Calu3 (cell line): ENCODE measurements at regions of chr4 and their contacts with region 1.

Region 1: DNA sequence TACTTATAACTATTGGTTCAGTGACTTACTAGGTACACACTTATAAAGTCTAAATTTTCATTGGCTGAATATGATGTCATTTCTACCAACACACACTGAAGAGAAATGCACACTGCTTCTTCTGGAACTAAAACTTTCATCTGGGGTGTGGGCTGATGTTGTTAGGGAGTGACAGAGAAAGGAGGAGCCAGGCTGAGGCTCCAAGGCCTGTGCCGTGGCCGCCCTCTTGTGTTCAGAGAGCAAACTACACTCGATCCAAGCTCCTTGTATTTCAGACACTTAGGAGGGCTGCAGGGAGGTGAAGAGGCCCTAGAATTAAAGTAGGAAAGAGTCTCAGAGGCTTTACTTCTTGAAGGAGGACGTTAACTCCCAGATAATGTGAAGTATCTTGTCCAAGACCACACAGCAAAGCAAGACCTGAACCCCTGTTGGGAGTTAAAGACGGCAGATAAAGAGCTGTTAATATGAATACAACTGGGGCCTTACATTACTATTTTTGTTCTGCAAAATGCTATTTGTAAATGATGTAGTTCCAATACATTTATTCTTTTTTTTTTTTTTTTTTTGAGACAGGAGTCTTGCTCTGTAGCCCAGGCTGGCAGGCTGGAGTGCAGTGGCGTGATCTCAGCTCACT is 137.5 kb downstream of the AFAP1 start:
- DNase-seq: peak; percentile 77
- H3K4me3 Mint-ChIP-seq: no peak overlapping the region
- H3K27ac Mint-ChIP-seq: no peak overlapping the region
- H3K4me1 Mint-ChIP-seq: peaks cover 32% of the 10 kb centered on the region
- H3K27me3 Mint-ChIP-seq: no peaks in the 10 kb centered on the region
- CTCF ChIP-seq: no peak

Region 2: DNA sequence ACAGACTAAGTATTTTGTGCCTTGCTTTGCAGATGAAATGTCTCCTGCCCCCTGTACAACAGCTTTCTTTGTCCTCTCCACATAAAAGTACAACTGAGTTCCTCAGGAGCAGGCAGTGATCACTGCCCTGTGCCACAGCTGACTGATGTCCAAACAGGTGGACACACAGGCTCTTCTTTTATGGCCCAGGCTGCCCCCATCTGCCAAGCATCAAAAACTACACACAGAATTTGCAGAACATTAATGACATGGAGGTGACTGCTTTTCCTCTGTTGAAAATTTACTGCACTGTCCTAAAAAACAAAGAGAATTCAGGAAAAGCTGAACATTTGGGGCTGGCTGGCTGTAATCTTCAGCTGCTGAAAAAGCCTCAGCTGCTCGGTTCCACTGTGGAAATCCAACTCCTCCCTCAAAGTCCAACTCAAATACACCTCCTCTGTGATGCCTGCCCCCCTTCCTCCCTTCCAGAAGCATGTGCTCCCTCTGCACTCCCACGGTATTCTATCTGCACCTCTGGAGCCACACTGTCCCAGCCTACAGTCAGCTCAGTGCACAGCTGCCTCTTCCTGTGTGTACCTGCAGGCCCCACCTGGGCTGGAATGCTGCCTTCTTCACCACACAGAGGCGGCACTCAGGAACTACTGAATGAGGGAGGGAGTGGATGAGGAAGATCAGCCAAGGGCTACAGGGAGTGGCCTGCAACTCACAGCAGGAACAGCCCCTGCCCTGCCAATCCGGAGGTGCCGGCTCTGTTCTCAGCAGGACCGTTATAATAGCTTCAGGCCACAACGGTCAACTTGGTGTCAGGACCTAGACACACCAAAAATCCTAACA is 127.1 kb after region 1 on chr4:
- CTCF ChIA-PET with region 1: interaction called, 3 read pairs
- intact Hi-C with region 1: loop called (anchors 10 kb)
- DNase-seq: peak; percentile 68
- H3K4me3 Mint-ChIP-seq: peak overlapping the region; percentile 47
- H3K27ac Mint-ChIP-seq: peak overlapping the region; percentile 2
- H3K4me1 Mint-ChIP-seq: peaks cover 36% of the 10 kb centered on the region
- H3K27me3 Mint-ChIP-seq: no peaks in the 10 kb centered on the region
- CTCF ChIP-seq: no peak

Region 3: GRCh38 chr4:7987148-7987989 is 185.2 kb after region 1 on chr4:
- CTCF ChIA-PET with region 1: interaction called, 8 read pairs
- intact Hi-C with region 1: loop called (anchors 1 kb)
- DNase-seq: peak; percentile 76
- H3K4me3 Mint-ChIP-seq: no peak overlapping the region
- H3K27ac Mint-ChIP-seq: no peak overlapping the region
- H3K4me1 Mint-ChIP-seq: no peaks in the 10 kb centered on the region
- H3K27me3 Mint-ChIP-seq: peaks cover 8% of the 10 kb centered on the region
- CTCF ChIP-seq: peak; percentile 81

Region 4: DNA sequence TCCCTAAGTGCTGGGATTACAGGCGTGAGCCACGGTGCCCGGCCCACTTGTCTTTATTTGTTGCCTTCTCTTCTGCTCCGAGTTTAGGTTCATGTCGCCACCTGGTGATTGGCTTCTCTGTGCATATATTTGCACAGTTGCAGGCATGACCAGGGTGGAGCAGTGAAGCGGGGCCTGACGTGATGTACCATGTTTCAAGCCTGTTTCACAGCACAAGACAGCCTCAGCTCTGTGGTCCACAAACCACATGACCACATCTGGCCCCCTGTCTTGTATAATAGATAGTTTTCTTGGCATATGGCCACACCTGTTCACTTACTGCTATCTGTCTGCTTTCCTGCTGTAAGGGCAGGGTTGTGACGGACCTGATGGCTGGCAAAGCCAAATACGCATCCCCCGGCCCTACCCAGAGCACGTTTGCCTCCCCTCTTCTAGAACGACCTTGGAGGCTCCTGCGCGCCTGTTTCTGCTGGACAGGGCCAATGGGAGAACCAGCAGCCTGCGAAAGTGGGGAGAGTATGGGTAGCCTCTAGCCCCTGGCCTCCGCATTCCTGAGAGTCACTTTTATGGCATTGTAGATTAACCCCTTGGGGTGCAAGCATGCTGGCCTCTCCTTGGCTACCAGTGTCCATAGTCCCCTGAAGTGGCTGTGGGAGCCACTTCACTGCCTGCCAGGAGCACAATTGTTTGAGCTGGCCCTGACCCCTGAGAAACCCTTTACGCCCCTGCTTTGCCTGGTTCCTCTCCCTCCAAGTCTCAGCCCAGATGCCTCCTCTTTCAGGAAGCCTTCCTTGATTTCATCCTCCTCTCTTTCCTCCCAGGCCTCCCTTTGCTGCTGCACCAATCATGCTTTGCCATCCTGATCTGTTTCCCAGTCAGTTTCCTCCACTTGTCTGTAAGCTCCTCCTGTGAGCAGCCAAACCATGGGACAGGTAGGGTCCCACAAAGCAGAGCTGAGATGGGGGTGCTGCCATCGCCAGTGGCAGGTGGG is 390.8 kb after region 1 on chr4:
- CTCF ChIA-PET with region 1: interaction called, 11 read pairs
- intact Hi-C with region 1: no loop called
- DNase-seq: peak; percentile 56
- H3K4me3 Mint-ChIP-seq: no peak overlapping the region
- H3K27ac Mint-ChIP-seq: peak overlapping the region; percentile 9
- H3K4me1 Mint-ChIP-seq: peaks cover 39% of the 10 kb centered on the region
- H3K27me3 Mint-ChIP-seq: no peaks in the 10 kb centered on the region
- CTCF ChIP-seq: no peak